Ovary (tissue), 10 donors: ENCODE measurements at regions of chr5 and their contacts with region 1.

Region 1: GRCh38 chr5:178786859-178787760 is 56.7 kb upstream of the ZNF354A start:
- DNase-seq: no peak
- H3K4me3 ChIP-seq: no peak overlapping the region
- H3K27ac ChIP-seq: no peak overlapping the region
- H3K4me1 ChIP-seq: no peaks in the 10 kb centered on the region
- H3K27me3 ChIP-seq: no peaks in the 10 kb centered on the region
- CTCF ChIP-seq: no peak
- EP300 ChIP-seq: no peak
- POLR2A ChIP-seq: no peak

Region 2: GRCh38 chr5:178757049-178757809 is 29.9 kb before region 1 on chr5:
- intact Hi-C with region 1: loop called in 1 of 4 experiments (anchors 1 kb)
- DNase-seq: no peak
- H3K4me3 ChIP-seq: no peak overlapping the region
- H3K27ac ChIP-seq: no peak overlapping the region
- H3K4me1 ChIP-seq: no peaks in the 10 kb centered on the region
- H3K27me3 ChIP-seq: no peaks in the 10 kb centered on the region
- CTCF ChIP-seq: no peak
- EP300 ChIP-seq: no peak
- POLR2A ChIP-seq: no peak